ENCODE measurements at regions of chr1 and their contacts with region 1.

Region 1: GRCh38 chr1:222073307-222073995 is 331.6 kb upstream of the DUSP10 start:
- DNase-seq: peak; percentile 15
- H3K4me3 ChIP-seq: no peak overlapping the region
- CTCF ChIP-seq: no peak

Region 2: DNA sequence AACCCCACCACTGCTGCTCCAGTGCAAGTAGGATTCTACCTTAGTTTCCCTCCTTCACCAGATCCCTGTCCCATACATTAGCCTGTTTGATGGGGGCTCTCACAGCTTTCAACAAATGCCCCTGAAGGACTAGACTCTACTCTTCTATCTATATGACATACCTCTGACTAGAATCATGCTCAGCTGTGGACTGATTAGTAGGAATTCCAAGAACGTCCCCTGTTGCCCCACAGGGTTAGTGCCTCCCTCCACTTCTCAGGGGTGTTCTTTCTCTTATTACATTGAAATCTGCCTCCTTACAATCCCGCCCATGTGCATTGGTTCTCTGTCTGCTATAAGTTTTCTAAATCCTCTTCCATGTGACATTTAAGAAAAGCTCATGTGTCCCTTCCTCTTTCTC is 44.4 kb after region 1 on chr1:
- in situ Hi-C with region 1: loop called (anchors 5 kb)
- DNase-seq: no peak
- H3K4me3 ChIP-seq: no peak overlapping the region
- CTCF ChIP-seq: no peak

Measured in astrocyte of the cerebellum (primary cell).